ENCODE measurements at regions of chr6 and their contacts with region 1.

Region 1: GRCh38 chr6:47309291-47310130 is at the start of gene TNFRSF21:
- DNase-seq: peak; percentile 94 to 98
- H3K4me3 ChIP-seq: peak within 1 kb of the TSS; percentile 84 to 93 (median 88)
- H3K27ac ChIP-seq: peak within 1 kb of the TSS; percentile 91 to 95 (median 93)
- H3K4me1 ChIP-seq: peaks cover 0 to 47% (median 31%) of the 10 kb centered on the region in 4 donors
- H3K27me3 ChIP-seq: peaks cover 0 to 17% (median 0%) of the 10 kb centered on the region in 3 donors
- CTCF ChIP-seq: peak in 6 of 7 experiments; percentile 57 to 99 (median 97)
- EP300 ChIP-seq: no peak
- POLR2A ChIP-seq: peak in 2 of 4 donors; percentile 87 to 93
- total RNA-seq, gene TNFRSF21: 33.8 to 112 (median 56.7) TPM

Region 2: DNA sequence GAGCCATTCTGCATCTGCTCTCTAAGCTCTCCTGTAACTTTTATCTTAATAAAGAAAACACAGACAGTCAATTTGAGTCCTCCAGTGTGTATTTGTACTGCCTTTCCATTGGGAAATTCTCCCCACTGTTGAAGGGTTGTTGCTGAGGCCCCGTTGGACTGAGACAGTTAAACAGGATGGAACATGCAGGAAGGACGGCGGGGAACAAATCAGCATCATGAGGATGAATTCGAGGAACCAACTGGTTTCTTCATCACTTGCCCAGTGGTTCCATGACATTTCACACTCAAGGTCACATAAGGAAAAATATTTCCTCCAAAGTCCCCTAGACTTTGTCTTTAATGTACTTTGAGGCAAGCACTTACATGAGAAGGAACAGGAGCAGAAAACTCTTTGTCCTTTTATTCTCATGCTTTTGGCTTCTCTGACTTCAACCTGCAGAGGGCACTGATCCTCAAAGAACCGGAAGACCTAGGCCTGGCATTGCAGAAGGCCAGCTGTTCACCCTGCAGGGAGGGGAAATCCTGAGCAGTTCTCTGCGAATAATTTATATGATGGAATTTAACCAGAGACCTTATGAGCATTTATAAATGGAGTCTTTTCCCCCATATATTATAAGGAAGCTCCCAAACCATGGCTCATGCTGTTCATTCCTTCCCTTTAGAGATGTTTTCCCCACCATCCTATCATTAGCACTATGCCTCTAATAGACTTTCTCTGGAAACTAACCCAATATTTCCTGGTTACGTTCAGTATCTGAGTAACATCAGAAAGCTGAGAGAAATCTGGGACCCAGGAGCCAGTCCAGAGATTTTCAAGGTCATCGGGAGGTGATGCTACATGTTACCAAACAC is 212.2 kb before region 1 on chr6:
- intact Hi-C with region 1: loop called (anchors 5 kb)
- DNase-seq: peak; percentile 72 to 94
- H3K4me3 ChIP-seq: no peak overlapping the region
- H3K27ac ChIP-seq: peak overlapping the region in 3 of 5 donors; percentile 26 to 63 (median 33)
- H3K4me1 ChIP-seq: peaks cover 6 to 52% (median 29%) of the 10 kb centered on the region in 4 donors
- H3K27me3 ChIP-seq: no peaks in the 10 kb centered on the region
- CTCF ChIP-seq: peak in 5 of 7 experiments; percentile 47 to 68 (median 57)
- EP300 ChIP-seq: no peak
- POLR2A ChIP-seq: no peak

Measured in stomach (tissue), 19 donors.